ENCODE measurements at regions of chr1 and their contacts with region 1.

Region 1: GRCh38 chr1:240739754-240740153 is 127.8 kb upstream of the GREM2 start:
- DNase-seq: no peak
- H3K4me3 ChIP-seq: no peak overlapping the region
- H3K27ac ChIP-seq: no peak overlapping the region
- H3K4me1 ChIP-seq: no peaks in the 10 kb centered on the region
- H3K27me3 ChIP-seq: no peaks in the 10 kb centered on the region
- CTCF ChIP-seq: no peak

Region 2: DNA sequence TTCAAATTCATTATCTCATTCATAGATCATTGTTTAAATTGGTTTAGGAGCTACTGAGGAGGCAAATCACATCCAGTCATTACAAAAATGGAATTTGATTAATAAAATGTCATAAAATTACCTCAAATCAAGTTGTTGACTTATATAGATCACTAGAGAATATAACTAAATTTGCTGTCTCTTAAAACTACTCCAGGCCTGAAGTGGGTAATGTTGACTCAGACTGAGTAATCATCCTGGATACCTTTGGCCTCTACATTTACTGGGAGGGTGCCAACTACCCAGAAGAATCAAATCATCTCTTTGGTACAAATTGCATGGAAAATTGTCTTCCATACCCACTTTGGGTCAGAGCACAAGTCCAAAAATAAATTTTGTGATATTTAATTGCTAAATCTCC is 63.4 kb after region 1 on chr1:
- intact Hi-C with region 1: loop called (anchors 10 kb)
- DNase-seq: no peak
- H3K4me3 ChIP-seq: no peak overlapping the region
- H3K27ac ChIP-seq: no peak overlapping the region
- H3K4me1 ChIP-seq: no peaks in the 10 kb centered on the region
- H3K27me3 ChIP-seq: no peaks in the 10 kb centered on the region
- CTCF ChIP-seq: no peak

Measured in left ventricle myocardium inferior (tissue), 1 donor.